ENCODE measurements at regions of chr6 and their contacts with region 1.

Region 1: DNA sequence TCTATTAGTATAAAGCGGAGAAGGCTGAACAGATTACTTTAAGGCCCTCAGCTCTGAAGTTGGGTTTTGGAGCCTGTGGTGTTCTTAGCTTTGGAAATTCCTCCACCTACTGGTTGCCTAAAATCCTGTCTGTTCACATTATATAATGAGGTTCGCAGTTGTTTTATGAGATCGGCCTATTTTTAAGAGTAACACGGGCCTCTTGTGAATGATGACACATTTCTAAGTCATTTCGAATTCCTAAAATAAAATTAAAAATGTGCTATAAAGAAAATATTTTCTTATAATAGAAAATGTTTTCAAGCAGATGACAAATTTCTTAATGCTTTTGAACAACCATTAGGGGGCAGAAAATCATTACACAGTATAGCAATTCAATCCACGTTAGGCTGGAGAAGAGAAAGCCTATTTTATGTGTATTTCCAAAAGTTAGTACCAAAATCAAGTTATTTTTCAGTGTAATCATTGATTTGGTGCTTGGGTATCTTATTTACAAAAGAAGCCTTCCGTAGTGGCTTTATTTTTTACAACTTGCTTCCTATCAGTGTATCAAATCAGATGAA is 15.8 kb upstream of the FAM8A1 start:
- DNase-seq: peak; percentile 29
- H3K4me3 Mint-ChIP-seq: no peak overlapping the region
- H3K27ac Mint-ChIP-seq: no peak overlapping the region
- H3K4me1 Mint-ChIP-seq: peaks cover 9% of the 10 kb centered on the region
- H3K27me3 Mint-ChIP-seq: peaks cover 13% of the 10 kb centered on the region

Region 2: GRCh38 chr6:17156112-17156921 is 428.0 kb before region 1 on chr6:
- CTCF ChIA-PET with region 1: interaction called, 11 read pairs
- DNase-seq: peak; percentile 64
- H3K4me3 Mint-ChIP-seq: no peak overlapping the region
- H3K27ac Mint-ChIP-seq: no peak overlapping the region
- H3K4me1 Mint-ChIP-seq: no peaks in the 10 kb centered on the region
- H3K27me3 Mint-ChIP-seq: no peaks in the 10 kb centered on the region

Region 3: DNA sequence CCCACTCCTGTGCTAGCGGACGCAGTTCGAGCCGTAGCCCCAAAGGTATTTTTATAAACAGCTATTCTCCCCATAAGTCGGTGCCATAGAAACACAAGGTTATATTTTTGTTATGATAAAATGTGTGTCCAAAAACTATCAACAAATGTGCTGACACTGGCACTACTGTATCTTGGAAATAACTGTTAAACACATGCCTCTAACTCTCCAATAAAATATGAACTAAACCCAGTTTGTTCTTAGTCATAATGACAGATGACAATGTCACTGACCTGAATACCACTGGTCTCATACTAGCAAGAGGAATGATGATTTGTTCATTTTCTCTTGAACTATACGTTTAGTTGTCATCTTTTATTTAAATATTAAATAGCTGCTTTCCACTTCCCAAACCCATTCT is 173.8 kb after region 1 on chr6:
- CTCF ChIA-PET with region 1: no interaction called
- DNase-seq: no peak
- H3K4me3 Mint-ChIP-seq: no peak overlapping the region
- H3K27ac Mint-ChIP-seq: no peak overlapping the region
- H3K4me1 Mint-ChIP-seq: no peaks in the 10 kb centered on the region
- H3K27me3 Mint-ChIP-seq: no peaks in the 10 kb centered on the region

Region 4: GRCh38 chr6:17816921-17817611 is 232.7 kb after region 1 on chr6:
- CTCF ChIA-PET with region 1: interaction called, 29 read pairs
- DNase-seq: no peak
- H3K4me3 Mint-ChIP-seq: no peak overlapping the region
- H3K27ac Mint-ChIP-seq: no peak overlapping the region
- H3K4me1 Mint-ChIP-seq: no peaks in the 10 kb centered on the region
- H3K27me3 Mint-ChIP-seq: peaks cover 5% of the 10 kb centered on the region

Measured in activated naive CD4-positive, alpha-beta T cell treated with anti-CD3 and anti-CD28 coated beads, Interleukin-2, amount 10 ng/mL, durations not matched to agents 7 days and 5 days (primary cell).